ENCODE measurements at regions of chr10 and their contacts with region 1.

Region 1: GRCh38 chr10:96229568-96230030 is 41.8 kb downstream of the BLNK start:
- DNase-seq: peak; percentile 86
- ATAC-seq: peak; percentile 77
- H3K4me3 Mint-ChIP-seq: no peak overlapping the region
- H3K27ac Mint-ChIP-seq: no peak overlapping the region
- H3K4me1 Mint-ChIP-seq: no peaks in the 10 kb centered on the region
- H3K27me3 Mint-ChIP-seq: no peaks in the 10 kb centered on the region

Region 2: DNA sequence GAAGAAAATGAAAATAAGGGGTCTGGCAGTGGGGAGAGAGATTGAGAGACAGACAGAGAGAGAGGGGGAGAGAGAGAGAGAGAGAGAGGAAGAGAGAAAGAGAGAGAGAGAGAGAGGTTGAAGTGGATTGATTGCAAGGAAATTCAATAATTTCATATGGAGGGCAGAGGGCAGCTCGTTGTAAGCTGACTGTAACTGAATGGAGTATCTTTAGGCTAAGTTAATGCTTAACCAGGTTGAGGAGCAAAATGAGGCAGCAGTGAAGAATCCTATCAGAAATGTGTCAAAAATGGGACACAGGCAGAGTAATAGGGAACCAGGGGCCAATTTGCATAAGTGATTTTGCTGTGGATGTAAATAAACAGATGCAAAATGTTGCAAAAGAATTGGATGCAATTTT is 20.8 kb after region 1 on chr10:
- CTCF ChIA-PET with region 1: interaction called, 20 read pairs
- POLR2A ChIA-PET with region 1: no interaction called
- intact Hi-C with region 1: no loop called
- DNase-seq: no peak
- ATAC-seq: no peak
- H3K4me3 Mint-ChIP-seq: no peak overlapping the region
- H3K27ac Mint-ChIP-seq: no peak overlapping the region
- H3K4me1 Mint-ChIP-seq: no peaks in the 10 kb centered on the region
- H3K27me3 Mint-ChIP-seq: no peaks in the 10 kb centered on the region

Region 3: DNA sequence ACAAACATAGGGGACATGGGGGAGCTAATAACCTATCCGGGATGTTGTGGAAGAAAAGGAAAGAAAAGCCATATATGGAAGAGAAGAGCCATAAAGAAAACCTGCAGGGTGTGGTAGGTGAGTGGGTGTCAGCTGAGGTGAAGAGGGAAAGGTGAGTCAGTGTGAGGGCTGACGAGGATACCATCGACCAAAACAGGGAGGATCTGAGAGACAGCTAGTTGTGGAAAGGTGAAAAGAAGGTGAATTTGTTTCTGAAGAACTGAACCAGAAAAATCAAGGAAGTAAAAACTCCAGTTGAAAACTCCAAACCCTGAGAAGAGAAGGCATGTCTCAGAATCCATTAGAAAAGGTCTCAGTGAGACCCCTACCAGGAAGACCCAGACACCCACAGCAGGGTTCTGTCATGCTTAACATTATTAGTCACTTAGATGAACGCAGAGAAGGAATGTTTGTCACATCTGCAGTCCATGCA is 37.7 kb after region 1 on chr10:
- CTCF ChIA-PET with region 1: interaction called, 12 read pairs
- POLR2A ChIA-PET with region 1: no interaction called
- intact Hi-C with region 1: no loop called
- DNase-seq: no peak
- ATAC-seq: peak; percentile 55
- H3K4me3 Mint-ChIP-seq: no peak overlapping the region
- H3K27ac Mint-ChIP-seq: no peak overlapping the region
- H3K4me1 Mint-ChIP-seq: peaks cover 5% of the 10 kb centered on the region
- H3K27me3 Mint-ChIP-seq: peaks cover 8% of the 10 kb centered on the region

Region 4: GRCh38 chr10:96292971-96293920 is 63.6 kb after region 1 on chr10:
- CTCF ChIA-PET with region 1: interaction called, 64 read pairs
- POLR2A ChIA-PET with region 1: no interaction called
- intact Hi-C with region 1: loop called (anchors 1 kb)
- DNase-seq: peak; percentile 36
- ATAC-seq: peak; percentile 84
- H3K4me3 Mint-ChIP-seq: no peak overlapping the region
- H3K27ac Mint-ChIP-seq: no peak overlapping the region
- H3K4me1 Mint-ChIP-seq: peaks cover 26% of the 10 kb centered on the region
- H3K27me3 Mint-ChIP-seq: no peaks in the 10 kb centered on the region

Region 5: GRCh38 chr10:96305019-96305418 is 75.4 kb after region 1 on chr10:
- CTCF ChIA-PET with region 1: interaction called, 17 read pairs
- POLR2A ChIA-PET with region 1: no interaction called
- intact Hi-C with region 1: no loop called
- DNase-seq: peak; percentile 26
- ATAC-seq: peak; percentile 23
- H3K4me3 Mint-ChIP-seq: no peak overlapping the region
- H3K27ac Mint-ChIP-seq: no peak overlapping the region
- H3K4me1 Mint-ChIP-seq: peaks cover 37% of the 10 kb centered on the region
- H3K27me3 Mint-ChIP-seq: peaks cover 14% of the 10 kb centered on the region

Region 6: DNA sequence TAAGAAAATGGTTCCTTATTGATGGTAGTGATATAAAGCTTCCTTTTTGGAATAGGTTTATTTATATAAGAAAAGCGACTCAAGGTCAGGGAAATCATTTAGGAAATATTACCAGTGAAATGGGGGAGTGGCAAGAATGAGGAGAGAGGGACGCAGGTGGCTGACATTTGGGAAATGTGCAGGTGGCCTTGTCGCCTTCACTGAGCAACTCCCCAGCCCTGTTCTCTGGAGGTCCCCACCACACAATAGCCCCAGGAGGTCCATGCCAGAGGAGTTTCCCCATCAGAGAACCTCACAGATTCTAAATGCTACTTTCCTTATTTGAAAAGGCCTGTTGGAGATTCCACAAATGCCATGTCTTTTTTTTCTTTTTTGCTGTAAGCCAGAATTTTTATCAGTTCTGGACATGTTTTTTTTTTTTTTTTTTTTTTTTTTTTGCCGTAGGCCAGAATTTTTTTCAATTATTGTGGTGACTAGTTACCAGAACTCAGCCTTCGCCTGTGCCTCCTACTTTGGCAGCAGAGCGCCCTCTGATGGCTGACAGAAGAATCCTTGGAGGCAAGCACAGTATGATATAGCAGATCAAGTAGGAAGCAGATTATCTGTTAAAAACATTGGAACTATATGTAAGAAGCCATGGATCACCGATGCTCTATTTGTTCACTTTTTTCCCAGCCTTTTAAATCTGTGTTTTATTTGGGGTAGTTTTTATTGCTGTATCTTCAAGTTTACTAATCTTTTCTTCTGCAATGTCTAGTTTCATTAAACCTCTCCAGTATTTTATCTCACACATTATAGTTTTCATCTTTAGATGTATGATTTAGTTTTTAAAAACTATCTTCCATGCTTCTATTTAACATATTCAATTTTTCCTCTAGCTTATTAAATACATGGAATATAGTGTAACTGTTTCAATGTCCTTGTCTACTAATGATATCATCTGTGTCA is 110.6 kb after region 1 on chr10:
- CTCF ChIA-PET with region 1: interaction called, 60 read pairs
- POLR2A ChIA-PET with region 1: no interaction called
- intact Hi-C with region 1: loop called (anchors 1 kb)
- DNase-seq: peak; percentile 83
- ATAC-seq: peak; percentile 77
- H3K4me3 Mint-ChIP-seq: no peak overlapping the region
- H3K27ac Mint-ChIP-seq: no peak overlapping the region
- H3K4me1 Mint-ChIP-seq: peaks cover 9% of the 10 kb centered on the region
- H3K27me3 Mint-ChIP-seq: peaks cover 6% of the 10 kb centered on the region